ENCODE measurements at regions of chr1 and their contacts with region 1.

Region 1: GRCh38 chr1:225871359-225872074 is 10.7 kb downstream of the TMEM63A start:
- DNase-seq: peak; percentile 60 to 66
- ATAC-seq: peak; percentile 79 to 86
- H3K4me3 ChIP-seq: no peak overlapping the region
- H3K27ac ChIP-seq: peak overlapping the region in 1 of 2 experiments; percentile 30; a peak in 3 of 6 replicates
- H3K4me1 ChIP-seq: peaks cover 29% of the 10 kb centered on the region
- CTCF ChIP-seq: no peak
- EP300 ChIP-seq: no peak
- POLR2A ChIP-seq: no peak
- RAD21 ChIP-seq: no peak

Region 2: GRCh38 chr1:225923692-225924555 is 52.4 kb after region 1 on chr1 and contains the start of gene PYCR2:
- CTCF ChIA-PET with region 1: no interaction called
- POLR2A ChIA-PET with region 1: interaction called, 14 read pairs
- DNase-seq: peak; percentile 95 to 98
- ATAC-seq: peak; percentile 97 to 99
- H3K4me3 ChIP-seq: peak within 1 kb of the TSS; percentile 89
- H3K27ac ChIP-seq: peak within 1 kb of the TSS; percentile 98 to 99
- H3K4me1 ChIP-seq: peaks cover 16% of the 10 kb centered on the region
- CTCF ChIP-seq: no peak
- EP300 ChIP-seq: no peak
- POLR2A ChIP-seq: peak; percentile 94
- RAD21 ChIP-seq: no peak
- polyA plus RNA-seq, gene PYCR2: 45.4 and 45.8 TPM in 2 replicates

Region 3: GRCh38 chr1:225977937-225978748 is 106.6 kb after region 1 on chr1:
- CTCF ChIA-PET with region 1: interaction called, 10 read pairs
- POLR2A ChIA-PET with region 1: no interaction called
- DNase-seq: no peak
- ATAC-seq: 0 out of 6 replicates have a peak, but pooled peaks of 1 of the 2 experiments have one; percentile 27
- H3K4me3 ChIP-seq: no peak overlapping the region
- H3K27ac ChIP-seq: no peak overlapping the region
- H3K4me1 ChIP-seq: no peaks in the 10 kb centered on the region
- CTCF ChIP-seq: no peak
- EP300 ChIP-seq: no peak
- POLR2A ChIP-seq: no peak
- RAD21 ChIP-seq: no peak

Measured in A549 (cell line).